PC-9 (cell line): ENCODE measurements at regions of chr4 and their contacts with region 1.

Region 1: GRCh38 chr4:169069972-169070902 is 60.2 kb upstream of the CBR4 start:
- DNase-seq: peak; percentile 88 to 99
- H3K4me3 ChIP-seq: peak overlapping the region; percentile 53; the same call in 1 of the 2 replicates
- H3K27ac ChIP-seq: peak overlapping the region; percentile 97
- H3K4me1 ChIP-seq: peaks cover 47% of the 10 kb centered on the region
- H3K27me3 ChIP-seq: no peaks in the 10 kb centered on the region
- CTCF ChIP-seq: no peak

Region 2: GRCh38 chr4:169024762-169025161 is 45.5 kb before region 1 on chr4:
- CTCF ChIA-PET with region 1: interaction called, 5 read pairs
- POLR2A ChIA-PET with region 1: no interaction called
- intact Hi-C with region 1: loop called (anchors 2 kb)
- DNase-seq: peak; percentile 12 to 41
- H3K4me3 ChIP-seq: no peak overlapping the region
- H3K27ac ChIP-seq: no peak overlapping the region
- H3K4me1 ChIP-seq: 0 out of 2 replicates have a peak, but pooled peaks cover 6% of the 10 kb centered on the region
- H3K27me3 ChIP-seq: no peaks in the 10 kb centered on the region
- CTCF ChIP-seq: peak; percentile 68

Region 3: DNA sequence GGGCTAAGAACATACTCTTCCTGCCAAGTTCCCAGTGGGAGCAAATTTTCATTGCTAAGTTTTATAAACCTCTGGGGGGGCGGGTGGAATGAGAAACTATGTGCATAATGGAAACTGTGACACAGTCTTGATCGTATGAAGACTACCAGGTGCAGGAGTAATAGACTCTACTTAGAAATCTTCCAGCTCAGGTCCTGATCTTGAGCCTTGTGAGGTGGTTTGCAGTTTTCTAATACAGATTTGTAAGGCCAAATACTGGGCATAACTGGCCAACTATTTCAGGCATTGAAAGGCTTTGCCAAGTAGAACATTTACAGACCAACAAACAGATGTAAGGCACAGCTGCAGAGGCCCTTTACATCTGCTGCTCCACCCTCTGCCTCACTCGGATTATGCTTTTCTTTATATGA is 29.5 kb after region 1 on chr4:
- CTCF ChIA-PET with region 1: interaction called, 8 read pairs
- POLR2A ChIA-PET with region 1: interaction called, 4 read pairs
- intact Hi-C with region 1: loop called (anchors 1 kb)
- DNase-seq: no peak
- H3K4me3 ChIP-seq: no peak overlapping the region
- H3K27ac ChIP-seq: no peak overlapping the region
- H3K4me1 ChIP-seq: 0 out of 2 replicates have a peak, but pooled peaks cover 12% of the 10 kb centered on the region
- H3K27me3 ChIP-seq: no peaks in the 10 kb centered on the region
- CTCF ChIP-seq: no peak

Region 4: GRCh38 chr4:169115897-169116254 is 45.6 kb after region 1 on chr4:
- CTCF ChIA-PET with region 1: interaction called, 3 read pairs
- POLR2A ChIA-PET with region 1: no interaction called
- intact Hi-C with region 1: loop called (anchors 1 kb)
- DNase-seq: peak; percentile 78 to 93
- H3K4me3 ChIP-seq: no peak overlapping the region
- H3K27ac ChIP-seq: peak overlapping the region; percentile 98
- H3K4me1 ChIP-seq: peaks cover 25% of the 10 kb centered on the region
- H3K27me3 ChIP-seq: no peaks in the 10 kb centered on the region
- CTCF ChIP-seq: peak; percentile 49; the same call in 1 of the 2 replicates

Region 5: DNA sequence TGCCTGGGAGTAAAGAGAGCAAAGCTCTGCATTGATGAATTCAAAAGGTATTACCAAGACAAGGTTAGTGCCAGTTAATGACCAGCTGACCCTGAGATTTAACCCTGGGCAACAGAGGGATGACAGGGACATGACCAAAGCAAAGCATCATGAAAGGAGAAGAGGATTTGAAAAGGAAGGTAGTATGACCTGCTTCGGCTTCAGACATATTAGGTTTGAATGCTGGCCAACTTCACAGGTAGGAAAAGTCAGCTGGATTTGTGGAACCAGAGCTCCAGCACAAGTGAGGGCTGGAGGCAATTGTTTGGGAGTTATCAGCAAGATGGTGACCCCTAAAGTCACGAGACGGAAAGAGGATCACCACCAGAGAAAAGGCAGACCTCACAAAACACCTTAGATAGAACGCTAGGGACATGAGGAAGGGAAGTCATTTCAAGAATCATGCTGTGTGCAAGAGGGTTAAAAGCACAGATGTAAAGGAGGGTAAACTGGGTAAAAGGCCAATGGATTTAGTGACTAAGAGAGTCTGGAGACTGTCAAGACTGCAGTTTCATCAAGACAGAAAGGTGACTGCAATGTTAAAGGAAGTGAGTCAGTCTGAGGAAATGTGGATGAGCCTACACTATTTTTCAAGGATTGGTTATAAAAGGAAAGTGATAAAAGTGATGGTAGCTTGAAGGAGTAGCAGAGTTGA is 155.0 kb after region 1 on chr4:
- CTCF ChIA-PET with region 1: no interaction called
- POLR2A ChIA-PET with region 1: no interaction called
- intact Hi-C with region 1: loop called (anchors 1 kb)
- DNase-seq: peak; percentile 18 to 86
- H3K4me3 ChIP-seq: no peak overlapping the region
- H3K27ac ChIP-seq: peak overlapping the region; percentile 88
- H3K4me1 ChIP-seq: peaks cover 37% of the 10 kb centered on the region
- H3K27me3 ChIP-seq: no peaks in the 10 kb centered on the region
- CTCF ChIP-seq: no peak

Region 6: DNA sequence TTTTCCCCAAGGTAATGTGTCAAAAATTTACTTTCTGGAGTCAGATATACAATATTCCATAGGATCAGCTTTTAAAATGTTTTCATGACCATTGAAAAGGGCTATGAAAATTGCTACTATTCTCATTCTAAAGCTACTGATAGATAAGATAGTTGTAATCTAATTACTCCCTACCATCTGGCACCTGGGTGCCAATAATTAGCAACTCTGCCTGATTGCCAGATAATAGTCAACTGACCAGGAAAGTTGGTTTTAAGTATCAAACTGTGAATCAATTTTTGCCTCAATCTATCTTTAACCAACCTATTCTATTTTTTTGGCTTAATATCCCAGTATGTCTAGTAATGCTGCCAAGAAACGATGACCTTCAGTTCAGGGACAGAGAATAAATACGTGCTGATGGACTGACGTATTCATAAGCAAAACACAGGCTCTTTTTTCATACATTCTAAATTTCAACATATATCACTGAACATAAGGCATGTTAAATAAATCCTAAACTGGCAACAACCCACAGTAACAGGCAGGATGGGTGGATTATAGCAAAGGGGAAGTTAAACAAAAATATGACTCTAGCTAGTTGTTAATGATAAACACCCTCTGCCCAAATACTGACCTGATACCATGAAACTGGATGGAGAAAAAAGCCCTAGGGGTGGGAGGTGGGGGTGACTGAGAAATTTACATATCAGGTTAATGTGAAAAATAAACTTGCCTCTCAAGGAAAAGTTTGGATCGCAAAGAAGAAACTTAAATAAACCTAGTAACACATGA is 182.3 kb after region 1 on chr4:
- CTCF ChIA-PET with region 1: interaction called, 6 read pairs
- POLR2A ChIA-PET with region 1: interaction called, 3 read pairs
- intact Hi-C with region 1: loop called (anchors 1 kb)
- DNase-seq: no peak
- H3K4me3 ChIP-seq: no peak overlapping the region
- H3K27ac ChIP-seq: peak overlapping the region; percentile 81
- H3K4me1 ChIP-seq: peaks cover 54% of the 10 kb centered on the region
- H3K27me3 ChIP-seq: no peaks in the 10 kb centered on the region
- CTCF ChIP-seq: no peak

Region 7: GRCh38 chr4:169362607-169363006 is 292.4 kb after region 1 on chr4:
- CTCF ChIA-PET with region 1: no interaction called
- POLR2A ChIA-PET with region 1: interaction called, 22 read pairs
- intact Hi-C with region 1: no loop called
- DNase-seq: no peak
- H3K4me3 ChIP-seq: no peak overlapping the region
- H3K27ac ChIP-seq: peak overlapping the region; percentile 57; the same call in 1 of the 2 replicates
- H3K4me1 ChIP-seq: no peaks in the 10 kb centered on the region
- H3K27me3 ChIP-seq: no peaks in the 10 kb centered on the region
- CTCF ChIP-seq: no peak